AG04449 (cell line): ENCODE measurements at regions of chr2 and their contacts with region 1.

Region 1: GRCh38 chr2:132424526-132425121 is 8.0 kb downstream of the GPR39 start:
- DNase-seq: no peak
- H3K4me3 ChIP-seq: no peak overlapping the region
- CTCF ChIP-seq: no peak

Region 2: GRCh38 chr2:132438691-132439090 is 14.1 kb after region 1 on chr2:
- CTCF ChIA-PET with region 1: interaction called, 16 read pairs
- POLR2A ChIA-PET with region 1: no interaction called
- DNase-seq: peak; percentile 81
- H3K4me3 ChIP-seq: no peak overlapping the region
- CTCF ChIP-seq: no peak

Region 3: GRCh38 chr2:132448771-132449170 is 24.1 kb after region 1 on chr2:
- CTCF ChIA-PET with region 1: interaction called, 15 read pairs
- POLR2A ChIA-PET with region 1: no interaction called
- DNase-seq: no peak
- H3K4me3 ChIP-seq: no peak overlapping the region
- CTCF ChIP-seq: peak; percentile 54